Left lung (tissue), 14 donors: ENCODE measurements at regions of chr7 and their contacts with region 1.

Region 1: GRCh38 chr7:25894902-25895791 is 256.9 kb upstream of the NFE2L3 start:
- DNase-seq: peak; percentile 59 to 89 (median 67)
- ATAC-seq: peak; percentile 80
- H3K4me3 ChIP-seq: peak overlapping the region in 1 of 2 donors; percentile 9
- H3K27ac ChIP-seq: no peak overlapping the region
- H3K4me1 ChIP-seq: peaks cover 0 to 12% of the 10 kb centered on the region in 2 donors
- H3K27me3 ChIP-seq: peaks cover 0 to 40% of the 10 kb centered on the region in 2 donors
- CTCF ChIP-seq: peak; percentile 65 to 70

Region 2: DNA sequence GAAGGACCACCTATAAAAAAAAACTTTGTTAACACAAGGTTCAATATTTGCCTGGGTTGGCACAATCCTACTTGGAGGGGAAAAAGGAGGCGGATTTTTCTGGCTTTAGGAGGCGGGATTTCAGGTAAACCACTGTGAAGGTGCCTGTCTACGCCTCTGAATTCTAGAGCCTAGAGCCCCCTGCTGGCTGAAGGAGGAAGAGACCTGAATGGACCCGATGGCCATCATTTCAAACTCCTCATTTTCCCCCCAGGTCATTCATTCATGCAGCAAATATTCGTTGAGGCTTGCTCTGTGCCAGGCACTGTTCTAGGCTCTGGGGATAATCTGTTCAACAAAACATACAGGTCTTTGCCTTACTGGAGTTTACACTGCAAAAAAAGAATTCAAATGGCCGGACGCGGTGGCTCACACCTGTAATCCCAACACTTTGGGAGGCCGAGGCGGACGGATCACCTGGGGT is 166.6 kb after region 1 on chr7:
- intact Hi-C with region 1: loop called in 1 of 2 experiments (anchors 5 kb)
- DNase-seq: peak in 3 of 4 donors; percentile 39 to 66 (median 56)
- ATAC-seq: peak; percentile 94
- H3K4me3 ChIP-seq: no peak overlapping the region
- H3K27ac ChIP-seq: no peak overlapping the region
- H3K4me1 ChIP-seq: peaks cover 0 to 4% of the 10 kb centered on the region in 2 donors
- H3K27me3 ChIP-seq: peaks cover 0 to 2% of the 10 kb centered on the region in 2 donors
- CTCF ChIP-seq: peak; percentile 74 to 79